Gastrocnemius medialis (tissue), 4 donors: ENCODE measurements at regions of chr19 and their contacts with region 1.

Region 1: DNA sequence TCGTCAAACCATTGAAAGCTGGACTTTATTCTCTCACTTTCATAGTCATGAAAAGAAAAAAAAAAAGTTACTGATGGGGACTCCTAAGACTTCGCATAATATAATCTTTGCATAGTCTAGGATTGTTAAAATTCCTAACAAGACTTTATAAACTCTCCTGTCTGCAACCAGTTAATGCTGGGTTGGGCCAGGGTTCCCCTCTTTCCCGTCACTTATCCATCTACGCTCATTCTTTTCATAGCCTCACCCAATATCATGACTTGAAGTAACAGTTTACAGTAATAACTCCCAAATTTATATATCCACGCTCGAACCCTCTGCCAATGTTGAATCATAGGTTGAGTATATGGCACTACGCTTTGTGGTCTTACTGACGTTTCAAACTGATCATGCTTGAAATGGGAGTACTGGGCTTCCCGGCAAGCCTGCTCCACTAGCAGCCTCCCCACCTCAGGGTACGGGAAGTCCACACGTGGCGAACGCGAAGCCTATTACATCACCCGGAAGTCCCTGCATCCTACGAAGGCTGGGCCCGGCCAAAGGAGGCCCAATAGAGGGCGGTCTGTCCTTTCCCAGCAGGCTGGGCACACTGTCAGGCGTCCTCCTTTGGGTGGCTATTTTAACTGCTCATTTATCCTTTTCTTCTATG is 743 bp upstream of the ZNF460 start:
- DNase-seq: peak; percentile 89 to 93
- ATAC-seq: peak; percentile 90 to 94
- H3K4me3 ChIP-seq: peak overlapping the region; percentile 96 to 97 (median 96)
- H3K27ac ChIP-seq: peak overlapping the region; percentile 93 to 99 (median 96)
- H3K4me1 ChIP-seq: peaks cover 31 to 39% of the 10 kb centered on the region in 2 donors
- H3K27me3 ChIP-seq: no peaks in the 10 kb centered on the region
- CTCF ChIP-seq: peak in 3 of 5 experiments; percentile 31 to 52 (median 33)
- POLR2A ChIP-seq: no peak

Region 2: DNA sequence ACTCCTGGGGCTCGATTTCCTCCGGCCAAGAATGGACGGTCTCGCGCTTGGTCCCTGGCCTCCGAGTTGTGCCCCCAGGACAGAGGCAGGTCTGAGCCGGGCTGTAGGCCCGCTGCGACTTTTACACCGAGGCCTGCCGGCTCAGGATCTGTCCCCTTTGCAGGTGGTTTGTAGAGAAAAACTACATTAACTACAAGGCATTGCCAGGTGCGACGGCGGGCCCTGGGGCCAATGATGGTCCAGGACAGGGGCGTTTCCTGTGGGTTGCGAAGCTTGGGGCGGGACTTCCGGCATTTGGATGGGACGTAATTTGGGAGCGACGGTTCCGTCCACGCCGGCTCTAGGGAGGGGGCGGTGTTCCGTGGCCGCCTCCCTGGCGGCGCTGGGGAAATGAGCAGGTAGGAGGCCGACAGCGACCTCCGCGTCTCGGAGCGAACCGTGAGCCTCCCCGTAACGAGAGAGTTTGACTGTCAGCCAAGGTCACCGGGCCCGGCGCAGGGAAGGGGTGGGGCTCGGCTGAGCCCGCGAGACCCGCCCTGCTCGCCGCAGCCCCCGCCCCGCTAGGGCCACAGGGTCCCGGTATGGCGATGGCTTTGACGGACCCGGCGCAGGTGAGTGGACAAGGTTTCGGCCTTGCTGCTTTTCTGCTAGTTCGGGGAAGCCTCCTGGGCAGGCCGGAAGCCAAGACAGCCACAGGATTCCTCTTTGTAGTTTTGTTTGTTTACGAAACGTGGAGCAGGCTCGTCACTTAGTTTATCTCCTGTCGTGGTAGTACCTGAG is 39.0 kb before region 1 on chr19 and contains the start of gene ZNF805:
- in situ Hi-C with region 1: no loop called
- intact Hi-C with region 1: loop called (anchors 1 kb)
- DNase-seq: peak; percentile 94 to 97
- ATAC-seq: peak; percentile 98 to 99
- H3K4me3 ChIP-seq: peak within 1 kb of the TSS; percentile 93 to 98 (median 97)
- H3K27ac ChIP-seq: peak within 1 kb of the TSS; percentile 89 to 97 (median 96)
- H3K4me1 ChIP-seq: peaks cover 23% of the 10 kb centered on the region in 2 donors
- H3K27me3 ChIP-seq: no peaks in the 10 kb centered on the region
- CTCF ChIP-seq: peak in 3 of 5 experiments; percentile 29 to 38 (median 36)
- POLR2A ChIP-seq: peak; percentile 62 to 67
- total RNA-seq, gene ZNF805: 9.3 to 20.2 (median 14.8) TPM

Region 3: DNA sequence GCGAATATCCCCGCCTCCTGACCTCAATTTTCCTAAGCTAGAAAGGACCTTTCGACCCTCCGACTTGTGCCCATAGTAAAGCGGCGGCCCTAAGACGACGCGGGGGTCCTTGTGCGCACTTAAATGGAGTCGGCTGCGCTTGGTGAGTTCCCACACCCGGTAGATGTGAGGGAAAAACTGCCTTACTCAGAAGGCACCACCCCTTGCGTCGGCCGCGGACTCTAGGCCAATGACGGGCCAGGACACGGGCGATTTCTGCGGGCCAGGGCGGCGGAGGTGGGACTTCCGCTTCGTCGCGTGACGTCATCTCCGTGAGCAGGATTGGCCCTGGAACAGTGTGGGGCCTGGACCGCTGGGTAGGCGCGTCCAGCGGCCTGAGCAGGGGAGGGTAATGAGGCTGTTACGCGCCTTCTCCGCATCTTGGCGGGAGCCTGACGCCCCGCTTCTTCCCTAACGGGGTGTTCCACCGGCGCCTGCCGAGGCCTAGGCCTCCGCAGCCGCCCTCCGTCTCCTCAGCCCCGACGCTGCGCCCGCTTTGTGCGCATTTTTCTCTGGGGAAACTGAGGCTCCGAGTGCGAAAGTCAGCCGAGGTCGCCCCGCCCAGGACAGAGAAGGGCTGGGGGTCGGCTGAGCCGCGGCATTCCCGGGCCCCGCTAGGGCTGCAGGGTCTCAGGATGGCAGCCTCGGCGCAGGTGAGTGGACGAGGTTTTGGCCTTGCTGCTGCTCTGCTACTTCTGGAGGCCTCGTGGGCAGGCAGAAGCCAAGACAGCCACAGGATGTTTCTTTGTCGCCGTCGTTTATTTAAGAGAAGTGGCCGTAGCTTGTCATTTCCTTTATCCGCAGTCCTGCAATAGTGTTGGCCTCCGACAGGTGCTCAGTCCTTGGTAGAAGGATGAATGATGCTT is 40.9 kb after region 1 on chr19 and contains the start of gene ZNF543:
- in situ Hi-C with region 1: no loop called
- intact Hi-C with region 1: loop called (anchors 1 kb)
- DNase-seq: peak; percentile 94 to 95
- ATAC-seq: peak; percentile 95 to 96
- H3K4me3 ChIP-seq: peak within 1 kb of the TSS; percentile 65 to 99 (median 91)
- H3K27ac ChIP-seq: peak within 1 kb of the TSS; percentile 87 to 98 (median 91)
- H3K4me1 ChIP-seq: peaks cover 18 to 19% of the 10 kb centered on the region in 2 donors
- H3K27me3 ChIP-seq: no peaks in the 10 kb centered on the region
- CTCF ChIP-seq: no peak
- POLR2A ChIP-seq: peak; percentile 78 to 87
- total RNA-seq, gene ZNF543: 5.8 to 11.5 (median 8.3) TPM

Region 4: DNA sequence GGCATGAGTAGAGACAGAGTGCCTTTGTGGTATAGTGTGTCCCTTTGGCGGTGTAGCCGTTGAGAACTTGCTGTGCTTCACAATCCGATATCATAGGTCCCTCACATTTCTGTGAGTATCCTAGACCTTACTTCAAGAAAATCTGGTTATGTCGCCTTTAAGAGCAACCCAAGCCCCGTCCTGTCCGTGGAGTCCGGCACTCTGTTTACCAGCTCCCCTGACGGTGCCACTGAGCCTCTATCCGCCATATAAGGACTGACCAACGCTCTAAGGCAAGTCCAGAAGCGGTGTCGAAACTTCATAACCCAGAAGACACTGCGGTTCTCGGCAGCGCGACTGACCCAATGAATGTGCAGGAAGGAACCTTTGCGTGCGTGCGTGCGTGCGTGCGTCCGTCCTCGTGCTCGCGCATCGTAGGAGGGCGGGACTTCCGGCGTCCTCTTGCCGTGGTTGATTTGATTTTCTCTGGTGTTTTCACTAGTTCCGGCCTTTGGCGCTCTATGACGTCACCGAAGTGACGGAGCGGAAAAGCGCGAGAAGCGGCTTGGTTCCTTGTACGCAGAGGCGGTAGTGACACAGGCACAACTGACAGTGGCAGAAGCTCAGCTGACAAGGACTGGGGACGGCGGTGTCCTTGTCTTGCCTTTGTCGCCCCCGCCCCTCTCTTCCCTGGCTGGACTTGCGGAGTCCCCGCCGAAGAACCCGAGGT is 83.6 kb after region 1 on chr19 and contains the starts of genes TRAPPC2B and ZNF547:
- in situ Hi-C with region 1: no loop called
- intact Hi-C with region 1: loop called (anchors 1 kb)
- DNase-seq: peak; percentile 99 to 100
- ATAC-seq: peak; percentile 94
- H3K4me3 ChIP-seq: peak within 1 kb of the TSS; percentile 68 to 93 (median 80)
- H3K27ac ChIP-seq: peak within 1 kb of the TSS; percentile 91 to 98 (median 97)
- H3K4me1 ChIP-seq: peaks cover 16 to 37% of the 10 kb centered on the region in 2 donors
- H3K27me3 ChIP-seq: no peaks in the 10 kb centered on the region
- CTCF ChIP-seq: peak in 1 of 5 experiments; percentile 15
- POLR2A ChIP-seq: peak; percentile 80 to 81
- total RNA-seq, gene TRAPPC2B: 34.4 to 47.4 (median 40.8) TPM
- total RNA-seq, gene ZNF547: 0.58 to 4.4 (median 2.6) TPM

Region 5: DNA sequence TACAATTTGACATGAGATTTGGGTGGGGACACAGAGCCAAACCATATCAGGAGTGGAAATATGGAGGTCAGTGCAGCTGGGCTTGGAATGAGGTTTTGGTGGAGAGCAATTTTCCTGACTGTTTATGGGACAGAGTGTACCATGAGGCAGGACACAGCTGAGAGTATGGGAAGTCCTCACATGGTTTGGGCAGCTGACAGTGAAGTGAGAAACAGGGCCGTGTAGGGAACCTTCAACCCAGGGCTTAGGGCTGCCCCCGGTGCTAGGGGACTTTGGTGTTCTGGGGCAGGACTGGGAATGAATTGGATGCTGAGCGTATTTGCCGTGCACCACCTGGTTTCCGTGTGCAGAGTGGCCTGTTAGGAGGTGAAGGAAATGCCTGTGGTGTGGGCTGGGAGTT is 116.2 kb after region 1 on chr19:
- in situ Hi-C with region 1: no loop called
- intact Hi-C with region 1: no loop called
- DNase-seq: no peak
- ATAC-seq: no peak
- H3K4me3 ChIP-seq: no peak overlapping the region
- H3K27ac ChIP-seq: no peak overlapping the region
- H3K4me1 ChIP-seq: peaks cover 10 to 14% of the 10 kb centered on the region in 2 donors
- H3K27me3 ChIP-seq: no peaks in the 10 kb centered on the region
- CTCF ChIP-seq: no peak
- POLR2A ChIP-seq: no peak

Region 6: GRCh38 chr19:57410877-57411671 is 131.5 kb after region 1 on chr19 and contains the start of gene ZNF17:
- in situ Hi-C with region 1: no loop called
- intact Hi-C with region 1: loop called (anchors 1 kb)
- DNase-seq: peak; percentile 93 to 95
- ATAC-seq: peak; percentile 99 to 100
- H3K4me3 ChIP-seq: peak within 1 kb of the TSS; percentile 83 to 94 (median 92)
- H3K27ac ChIP-seq: peak within 1 kb of the TSS; percentile 78 to 88 (median 84)
- H3K4me1 ChIP-seq: peaks cover 15 to 21% of the 10 kb centered on the region in 2 donors
- H3K27me3 ChIP-seq: no peaks in the 10 kb centered on the region
- CTCF ChIP-seq: no peak
- POLR2A ChIP-seq: peak; percentile 20 to 47
- total RNA-seq, gene ZNF17: 3.3 to 6.4 (median 5.4) TPM

Region 7: DNA sequence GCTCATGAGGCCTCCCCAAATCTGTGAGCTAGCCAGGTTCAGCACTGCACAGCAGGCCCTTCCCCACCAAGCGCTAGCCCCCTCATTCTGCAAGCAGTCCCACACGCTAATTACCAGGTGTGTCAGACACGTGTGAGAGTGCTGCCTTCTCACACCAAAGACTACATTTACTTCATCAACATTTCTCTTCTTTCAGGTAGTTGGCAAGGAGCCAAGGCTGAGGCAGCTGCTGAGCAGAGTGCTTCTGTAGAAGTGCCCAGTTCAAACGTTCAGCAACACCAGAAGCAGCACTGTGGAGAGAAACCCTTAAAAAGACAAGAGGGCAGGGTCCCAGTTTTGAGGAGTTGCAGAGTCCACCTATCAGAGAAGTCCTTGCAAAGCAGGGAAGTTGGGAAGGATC is 226.6 kb after region 1 on chr19:
- in situ Hi-C with region 1: no loop called
- intact Hi-C with region 1: loop called (anchors 10 kb)
- DNase-seq: no peak
- ATAC-seq: no peak
- H3K4me3 ChIP-seq: no peak overlapping the region
- H3K27ac ChIP-seq: no peak overlapping the region
- H3K4me1 ChIP-seq: peaks cover 0 to 3% of the 10 kb centered on the region in 2 donors
- H3K27me3 ChIP-seq: no peaks in the 10 kb centered on the region
- CTCF ChIP-seq: no peak
- POLR2A ChIP-seq: no peak